ENCODE measurements at regions of chr1 and their contacts with region 1.

Region 1: DNA sequence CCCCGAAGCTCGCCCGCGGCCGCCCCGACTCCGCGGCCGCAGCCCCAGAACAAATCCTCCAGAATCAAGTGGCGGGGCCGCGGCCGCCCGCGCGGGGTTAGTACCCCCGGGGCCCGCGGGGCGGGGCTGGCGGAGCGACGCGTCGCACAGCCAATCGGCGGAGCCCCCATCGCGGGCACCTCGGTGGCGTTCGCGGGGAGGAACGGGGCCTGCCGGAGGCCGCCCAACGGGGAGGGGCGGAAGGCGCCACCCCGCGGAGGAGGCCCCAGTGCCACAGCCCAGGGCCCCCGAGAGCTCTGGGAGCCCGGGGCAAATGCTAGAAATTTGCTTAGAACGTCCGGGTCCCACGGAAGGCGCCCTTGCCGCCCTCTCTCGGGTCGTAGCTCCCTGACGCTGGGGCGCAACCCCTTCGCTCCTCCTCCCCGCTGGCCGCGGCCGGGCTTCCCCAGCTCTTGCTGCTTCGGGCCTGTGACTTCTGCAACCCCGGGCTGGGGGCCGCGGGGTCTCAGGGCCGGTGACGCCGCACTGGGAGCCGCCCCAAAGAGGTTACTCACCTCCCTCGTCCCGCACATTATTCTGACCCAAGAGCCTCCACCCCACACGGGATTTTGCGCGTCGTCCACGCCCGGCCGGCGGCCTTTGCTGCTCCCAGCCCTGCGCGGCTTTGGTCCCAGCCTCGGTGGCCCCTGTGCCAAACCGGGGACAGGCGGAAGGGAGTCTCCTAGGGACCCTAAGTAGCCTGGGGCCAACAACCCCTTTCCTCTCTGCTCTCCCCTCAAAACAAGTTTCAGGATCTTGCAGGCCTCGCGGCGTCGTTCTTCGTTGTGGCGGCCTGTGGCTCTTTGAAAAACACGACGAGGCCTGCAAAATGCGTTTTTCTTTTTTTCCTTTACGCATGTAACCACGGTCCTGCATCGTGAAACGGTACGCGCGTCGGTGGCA is at the start of gene RUNX3:
- DNase-seq: peak; percentile 97
- H3K4me3 Mint-ChIP-seq: peak within 1 kb of the TSS; percentile 96
- H3K27ac Mint-ChIP-seq: peak within 1 kb of the TSS; percentile 92
- H3K4me1 Mint-ChIP-seq: peaks cover 69% of the 10 kb centered on the region
- H3K27me3 Mint-ChIP-seq: no peaks in the 10 kb centered on the region
- total RNA-seq, gene RUNX3: 110 and 112 TPM in 2 replicates

Region 2: DNA sequence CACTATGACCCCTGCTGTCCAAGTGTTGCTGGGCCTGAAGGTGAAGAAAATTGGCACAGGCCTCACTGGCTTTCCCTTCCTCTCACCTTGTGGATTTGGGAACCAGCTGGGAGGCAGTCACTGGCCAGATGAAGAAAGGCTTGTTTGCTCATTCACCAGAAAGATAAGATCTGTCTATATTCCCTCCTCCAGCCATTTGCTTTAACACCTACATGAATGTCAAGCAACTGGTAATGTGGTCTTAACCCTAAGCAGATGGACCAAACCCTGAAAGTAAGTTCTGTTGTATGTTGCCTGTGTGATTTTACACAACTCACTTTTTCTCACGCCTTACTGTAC is 297.7 kb before region 1 on chr1:
- intact Hi-C with region 1: no loop called
- DNase-seq: no peak
- H3K4me3 Mint-ChIP-seq: no peak overlapping the region
- H3K27ac Mint-ChIP-seq: no peak overlapping the region
- H3K4me1 Mint-ChIP-seq: peaks cover 2% of the 10 kb centered on the region
- H3K27me3 Mint-ChIP-seq: peaks cover 28% of the 10 kb centered on the region

Region 3: GRCh38 chr1:24955161-24955560 is 24.7 kb after region 1 on chr1:
- intact Hi-C with region 1: loop called (anchors 1 kb)
- DNase-seq: peak; percentile 92
- H3K4me3 Mint-ChIP-seq: peak overlapping the region; percentile 81
- H3K27ac Mint-ChIP-seq: peak overlapping the region; percentile 94
- H3K4me1 Mint-ChIP-seq: peaks cover 79% of the 10 kb centered on the region
- H3K27me3 Mint-ChIP-seq: no peaks in the 10 kb centered on the region

Region 4: GRCh38 chr1:24964811-24965570 is 34.5 kb after region 1 on chr1:
- intact Hi-C with region 1: loop called (anchors 1 kb)
- DNase-seq: peak; percentile 98
- H3K4me3 Mint-ChIP-seq: peak overlapping the region; percentile 96
- H3K27ac Mint-ChIP-seq: peak overlapping the region; percentile 97
- H3K4me1 Mint-ChIP-seq: peaks cover 71% of the 10 kb centered on the region
- H3K27me3 Mint-ChIP-seq: no peaks in the 10 kb centered on the region

Region 5: GRCh38 chr1:25037174-25038074 is 106.9 kb after region 1 on chr1:
- intact Hi-C with region 1: loop called (anchors 1 kb)
- DNase-seq: peak; percentile 90
- H3K4me3 Mint-ChIP-seq: peak overlapping the region; percentile 47
- H3K27ac Mint-ChIP-seq: peak overlapping the region; percentile 64
- H3K4me1 Mint-ChIP-seq: peaks cover 42% of the 10 kb centered on the region
- H3K27me3 Mint-ChIP-seq: peaks cover 9% of the 10 kb centered on the region

Region 6: GRCh38 chr1:25239681-25240541 is 309.4 kb after region 1 on chr1:
- intact Hi-C with region 1: loop called (anchors 10 kb)
- DNase-seq: peak; percentile 97
- H3K4me3 Mint-ChIP-seq: peak overlapping the region; percentile 91
- H3K27ac Mint-ChIP-seq: peak overlapping the region; percentile 98
- H3K4me1 Mint-ChIP-seq: peaks cover 48% of the 10 kb centered on the region
- H3K27me3 Mint-ChIP-seq: no peaks in the 10 kb centered on the region

Measured in activated CD4-positive, alpha-beta T cell treated with anti-CD3 and anti-CD28 coated beads, Interleukin-2, amount 10 ng/mL, durations not matched to agents 24 days and 14 days (primary cell).